Activated CD4-positive, alpha-beta T cell treated with anti-CD3 and anti-CD28 coated beads, Interleukin-2, amount 10 ng/mL, durations not matched to agents 7 days and 5 days (primary cell): ENCODE measurements at regions of chr19 and their contacts with region 1.

Region 1: GRCh38 chr19:18112989-18113478 is 15.5 kb downstream of the MAST3 start:
- DNase-seq: peak; percentile 84
- H3K4me3 Mint-ChIP-seq: no peak overlapping the region
- H3K27ac Mint-ChIP-seq: no peak overlapping the region
- H3K4me1 Mint-ChIP-seq: peaks cover 25% of the 10 kb centered on the region
- H3K27me3 Mint-ChIP-seq: no peaks in the 10 kb centered on the region

Region 2: GRCh38 chr19:18167975-18168645 is 55.1 kb after region 1 on chr19:
- CTCF ChIA-PET with region 1: interaction called, 13 read pairs
- POLR2A ChIA-PET with region 1: no interaction called
- DNase-seq: peak; percentile 73
- H3K4me3 Mint-ChIP-seq: no peak overlapping the region
- H3K27ac Mint-ChIP-seq: no peak overlapping the region
- H3K4me1 Mint-ChIP-seq: peaks cover 11% of the 10 kb centered on the region
- H3K27me3 Mint-ChIP-seq: no peaks in the 10 kb centered on the region